B cell (primary cell): ENCODE measurements at regions of chr20 and their contacts with region 1.

Region 1: DNA sequence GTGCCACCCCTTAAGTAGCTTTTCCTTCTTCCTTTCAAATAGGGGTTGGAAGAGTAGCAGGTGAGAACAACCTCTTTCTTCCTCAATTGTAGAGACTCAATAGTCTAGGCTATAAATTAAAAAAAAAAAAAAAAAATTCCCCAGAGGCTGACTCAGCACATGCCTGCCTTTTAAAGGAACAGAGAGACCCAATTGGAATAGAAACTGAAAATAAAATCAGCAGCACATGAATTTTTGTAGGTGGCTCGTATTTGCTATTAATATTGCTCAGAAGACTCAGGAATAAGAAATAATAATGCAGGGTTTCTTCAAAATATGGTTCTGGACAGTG is 19.3 kb downstream of the TOP1 start:
- DNase-seq: peak; percentile 75
- ATAC-seq: peak; percentile 73
- H3K4me3 ChIP-seq: peak overlapping the region in 3 of 5 experiments; percentile 24 to 48 (median 27)
- H3K4me3 Mint-ChIP-seq: peak overlapping the region; percentile 80
- H3K27ac ChIP-seq: peak overlapping the region; percentile 3 to 14
- H3K27ac Mint-ChIP-seq: peak overlapping the region; percentile 80
- H3K4me1 ChIP-seq: peaks cover 56 to 62% of the 10 kb centered on the region in 2 donors
- H3K4me1 Mint-ChIP-seq: peaks cover 80% of the 10 kb centered on the region
- H3K27me3 ChIP-seq: no peaks in the 10 kb centered on the region
- H3K27me3 Mint-ChIP-seq: no peaks in the 10 kb centered on the region
- CTCF ChIP-seq: no peak

Region 2: DNA sequence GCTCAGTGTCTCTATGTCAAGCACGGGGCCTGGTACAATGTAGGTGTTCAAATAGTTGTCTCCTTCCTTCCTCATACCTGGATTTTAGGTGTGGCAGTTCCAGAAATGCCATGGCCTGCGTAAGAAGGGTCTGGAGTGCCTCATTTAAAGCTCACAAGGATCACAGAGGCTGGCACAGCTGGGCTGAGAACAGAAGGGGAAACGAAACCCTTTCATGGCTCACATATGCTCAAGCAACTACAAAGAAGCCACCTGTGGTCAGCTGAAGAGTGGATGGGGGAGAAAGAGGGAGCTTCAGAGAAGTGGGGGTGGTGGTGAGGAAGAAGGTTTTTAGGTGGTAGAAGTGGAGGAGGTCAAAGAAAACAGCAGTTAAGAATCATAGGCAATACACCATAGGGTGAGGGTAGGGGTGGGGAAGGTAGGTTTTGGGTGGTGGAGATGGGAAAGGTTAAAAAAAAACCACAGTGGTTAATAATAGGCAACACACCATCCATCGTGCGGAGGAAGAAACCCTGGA is 36.3 kb before region 1 on chr20:
- CTCF ChIA-PET with region 1: interaction called, 3 read pairs
- POLR2A ChIA-PET with region 1: no interaction called
- intact Hi-C with region 1: loop called (anchors 5 kb)
- DNase-seq: peak; percentile 86
- ATAC-seq: peak; percentile 98
- H3K4me3 ChIP-seq: peak overlapping the region in 1 of 5 experiments; percentile 35
- H3K4me3 Mint-ChIP-seq: peak overlapping the region; percentile 52
- H3K27ac ChIP-seq: peak overlapping the region in 1 of 2 donors; percentile 4
- H3K27ac Mint-ChIP-seq: peak overlapping the region; percentile 47
- H3K4me1 ChIP-seq: peaks cover 36 to 43% of the 10 kb centered on the region in 2 donors
- H3K4me1 Mint-ChIP-seq: peaks cover 40% of the 10 kb centered on the region
- H3K27me3 ChIP-seq: no peaks in the 10 kb centered on the region
- H3K27me3 Mint-ChIP-seq: no peaks in the 10 kb centered on the region
- CTCF ChIP-seq: no peak

Region 3: DNA sequence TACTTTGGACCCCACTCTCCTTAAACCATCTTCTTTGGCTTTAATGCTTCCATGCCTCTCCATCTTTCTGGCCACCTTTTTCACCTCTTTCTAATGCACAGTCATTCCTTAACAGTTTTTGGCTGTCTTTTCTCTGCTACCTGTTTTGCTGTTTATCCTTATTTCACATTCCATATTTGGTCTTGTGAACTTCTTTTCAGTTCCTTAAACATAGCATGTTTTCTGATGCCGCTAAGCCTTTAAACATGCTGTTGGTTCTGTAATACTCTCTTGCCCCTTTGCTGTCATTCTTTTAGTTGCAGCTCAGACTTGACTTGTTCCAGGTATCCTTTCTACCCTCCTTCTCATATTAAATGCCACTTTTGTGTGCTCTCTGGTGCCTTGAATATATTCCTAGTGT is 16.4 kb after region 1 on chr20:
- CTCF ChIA-PET with region 1: interaction called, 7 read pairs
- POLR2A ChIA-PET with region 1: no interaction called
- intact Hi-C with region 1: loop called (anchors 2 kb)
- DNase-seq: peak; percentile 39
- ATAC-seq: peak; percentile 57
- H3K4me3 ChIP-seq: no peak overlapping the region
- H3K4me3 Mint-ChIP-seq: peak overlapping the region; percentile 24
- H3K27ac ChIP-seq: no peak overlapping the region
- H3K27ac Mint-ChIP-seq: peak overlapping the region; percentile 27
- H3K4me1 ChIP-seq: peaks cover 19 to 23% of the 10 kb centered on the region in 2 donors
- H3K4me1 Mint-ChIP-seq: peaks cover 46% of the 10 kb centered on the region
- H3K27me3 ChIP-seq: no peaks in the 10 kb centered on the region
- H3K27me3 Mint-ChIP-seq: no peaks in the 10 kb centered on the region
- CTCF ChIP-seq: no peak

Region 4: DNA sequence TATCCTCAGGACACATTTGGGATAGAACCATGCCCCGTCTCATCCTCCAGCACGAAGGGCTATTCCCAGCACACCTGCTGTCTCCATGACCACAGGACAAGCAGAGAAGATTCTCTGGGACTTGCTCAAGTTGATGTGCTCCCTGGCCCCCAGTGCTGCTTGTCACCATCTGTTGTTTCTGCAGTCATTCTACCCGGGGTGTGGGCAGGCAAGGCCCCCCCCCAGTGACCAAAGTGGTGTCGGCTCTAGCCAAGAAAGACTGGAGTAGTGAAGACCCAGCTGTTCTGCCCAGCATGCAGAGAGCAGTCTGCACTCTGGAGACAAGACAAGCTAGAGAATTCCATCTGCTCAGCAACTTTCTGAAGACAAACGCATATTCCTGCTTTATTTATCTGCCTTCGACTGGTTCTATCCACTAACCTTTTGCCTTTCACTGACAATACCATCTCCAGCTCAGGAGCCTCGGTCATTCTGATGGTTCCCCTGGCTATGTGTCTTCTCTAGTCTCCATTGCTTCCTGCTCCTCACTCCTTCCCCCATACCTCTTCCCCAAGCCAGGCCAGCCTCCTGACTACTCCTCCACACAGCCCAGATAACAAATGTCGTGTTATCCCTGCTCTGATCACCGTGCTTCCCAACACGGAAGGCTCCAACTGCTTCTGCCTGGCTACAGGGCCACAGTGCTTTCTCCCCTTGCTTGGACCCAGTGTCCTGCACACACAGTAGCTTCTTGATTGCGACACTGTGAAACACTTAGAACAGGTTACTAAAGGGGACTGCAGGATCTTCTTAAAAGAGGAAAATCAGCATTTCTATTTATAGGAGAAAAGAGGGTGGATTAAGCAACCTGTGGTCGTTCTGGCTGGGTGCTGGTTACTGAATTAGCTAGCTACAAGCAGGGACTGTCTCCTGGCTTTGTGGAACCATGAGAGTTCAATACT is 405.3 kb after region 1 on chr20:
- CTCF ChIA-PET with region 1: no interaction called
- POLR2A ChIA-PET with region 1: no interaction called
- intact Hi-C with region 1: no loop called
- DNase-seq: no peak
- ATAC-seq: no peak
- H3K4me3 ChIP-seq: no peak overlapping the region
- H3K4me3 Mint-ChIP-seq: no peak overlapping the region
- H3K27ac ChIP-seq: no peak overlapping the region
- H3K27ac Mint-ChIP-seq: no peak overlapping the region
- H3K4me1 ChIP-seq: no peaks in the 10 kb centered on the region
- H3K4me1 Mint-ChIP-seq: no peaks in the 10 kb centered on the region
- H3K27me3 ChIP-seq: no peaks in the 10 kb centered on the region
- H3K27me3 Mint-ChIP-seq: no peaks in the 10 kb centered on the region
- CTCF ChIP-seq: no peak